Naive thymus-derived CD4-positive, alpha-beta T cell (primary cell): ENCODE measurements at regions of chr9 and their contacts with region 1.

Region 1: DNA sequence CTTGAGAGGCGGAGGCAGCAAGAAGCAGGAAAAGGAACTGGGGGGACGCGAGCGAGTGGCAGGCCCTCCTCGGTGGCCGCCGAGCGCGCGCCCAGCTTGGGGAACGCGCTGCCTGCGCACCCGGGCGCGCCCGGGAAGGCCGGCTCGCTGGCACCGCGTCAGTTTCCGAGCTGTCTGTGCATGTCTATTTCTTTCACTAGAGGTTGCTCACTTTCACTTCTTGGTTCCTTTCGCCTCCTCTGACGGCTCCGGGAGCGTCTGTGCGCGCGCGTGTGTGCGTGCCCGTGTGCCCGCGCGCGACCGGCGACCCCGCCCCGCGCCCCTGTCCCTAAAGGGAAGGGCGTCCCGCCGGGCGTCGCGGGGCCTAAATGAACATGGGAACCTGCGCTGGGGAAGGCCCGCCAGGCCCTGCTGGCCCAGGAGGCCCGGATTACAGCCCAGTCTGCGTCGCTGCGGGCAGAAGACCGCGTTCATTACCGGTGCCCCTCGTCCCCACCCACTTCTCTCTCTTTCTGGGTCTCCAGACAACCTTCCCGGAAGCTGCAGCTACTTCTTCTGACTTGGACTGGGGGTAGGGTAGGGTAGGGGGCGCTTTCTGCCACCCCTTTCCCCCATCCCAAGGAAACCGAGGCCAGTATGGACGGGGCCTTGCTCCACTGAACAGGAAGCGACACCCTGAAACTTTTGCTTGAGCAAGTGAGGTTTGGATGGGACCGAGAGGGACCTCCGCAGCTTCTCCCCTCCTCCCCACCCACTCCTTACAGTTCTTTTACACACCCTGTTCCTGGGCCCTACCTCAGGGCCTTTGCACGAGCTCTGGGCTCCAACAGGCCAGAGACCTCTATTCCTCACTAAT is 205.7 kb upstream of the IER5L start:
- DNase-seq: peak; percentile 60 to 87 (median 79)
- ATAC-seq: peak; percentile 96
- H3K4me3 ChIP-seq: peak overlapping the region; percentile 62
- H3K4me3 Mint-ChIP-seq: peak overlapping the region; percentile 70 to 86 (median 82)
- H3K27ac ChIP-seq: peak overlapping the region; percentile 82
- H3K27ac Mint-ChIP-seq: peak overlapping the region; percentile 72 to 96 (median 92)
- H3K4me1 ChIP-seq: peaks cover 0 to 12% of the 10 kb centered on the region in 2 donors
- H3K4me1 Mint-ChIP-seq: peaks cover 8 to 19% (median 10%) of the 10 kb centered on the region in 7 donors
- H3K27me3 ChIP-seq: no peaks in the 10 kb centered on the region
- H3K27me3 Mint-ChIP-seq: peaks cover 0 to 9% (median 0%) of the 10 kb centered on the region in 5 donors

Region 2: DNA sequence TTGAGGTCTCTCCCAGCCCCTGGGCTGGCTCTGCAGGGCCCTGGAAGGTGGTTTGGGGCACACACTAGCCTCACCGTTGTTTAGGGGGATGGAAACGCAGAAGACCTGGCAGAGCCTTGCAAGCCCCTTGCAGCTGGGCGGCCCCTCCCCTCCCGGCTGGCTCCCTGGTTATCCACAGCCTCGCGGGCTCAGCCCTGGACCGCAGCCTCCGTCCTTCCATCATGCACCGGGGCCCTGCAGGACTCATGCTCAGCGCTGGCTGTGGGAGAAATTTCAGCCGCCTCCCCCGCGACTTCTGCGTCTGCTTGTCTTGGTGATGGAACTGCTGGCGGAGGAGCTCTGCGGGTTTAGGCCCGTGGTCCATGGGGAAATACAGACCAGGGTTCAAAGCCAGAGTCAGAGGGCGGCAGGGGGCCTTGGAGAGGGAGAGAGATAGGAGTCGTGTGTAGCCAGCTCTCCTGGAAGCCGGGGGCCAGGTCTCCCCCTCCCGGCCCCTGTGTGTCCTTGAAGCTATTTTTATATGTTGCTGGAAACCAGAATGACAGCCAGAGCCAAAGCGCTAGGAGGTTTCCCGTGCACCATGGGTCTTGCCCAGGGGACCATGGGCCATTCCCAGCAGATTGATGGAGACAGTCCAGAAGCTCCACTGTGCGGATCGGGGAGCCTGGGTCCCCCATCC is 129.8 kb before region 1 on chr9:
- CTCF ChIA-PET with region 1: no interaction called
- POLR2A ChIA-PET with region 1: no interaction called
- intact Hi-C with region 1: no loop called
- DNase-seq: no peak
- ATAC-seq: no peak
- H3K4me3 ChIP-seq: no peak overlapping the region
- H3K4me3 Mint-ChIP-seq: peak overlapping the region in 1 of 10 donors; percentile 70
- H3K27ac ChIP-seq: no peak overlapping the region
- H3K27ac Mint-ChIP-seq: no peak overlapping the region
- H3K4me1 ChIP-seq: peaks cover 7 to 10% of the 10 kb centered on the region in 2 donors
- H3K4me1 Mint-ChIP-seq: peaks cover 9 to 22% (median 14%) of the 10 kb centered on the region in 7 donors
- H3K27me3 ChIP-seq: no peaks in the 10 kb centered on the region
- H3K27me3 Mint-ChIP-seq: peaks cover 0 to 54% (median 0%) of the 10 kb centered on the region in 5 donors

Region 3: GRCh38 chr9:129333953-129334724 is 49.6 kb before region 1 on chr9:
- CTCF ChIA-PET with region 1: no interaction called
- POLR2A ChIA-PET with region 1: interaction called, 11 read pairs
- intact Hi-C with region 1: loop called in 1 of 2 experiments (anchors 5 kb)
- DNase-seq: peak in 4 of 9 donors; percentile 28 to 36 (median 32)
- ATAC-seq: peak; percentile 67
- H3K4me3 ChIP-seq: no peak overlapping the region
- H3K4me3 Mint-ChIP-seq: peak overlapping the region; percentile 3 to 88 (median 78)
- H3K27ac ChIP-seq: peak overlapping the region; percentile 38
- H3K27ac Mint-ChIP-seq: peak overlapping the region; percentile 29 to 91 (median 83)
- H3K4me1 ChIP-seq: peaks cover 3 to 28% of the 10 kb centered on the region in 2 donors
- H3K4me1 Mint-ChIP-seq: peaks cover 17 to 41% (median 25%) of the 10 kb centered on the region in 7 donors
- H3K27me3 ChIP-seq: no peaks in the 10 kb centered on the region
- H3K27me3 Mint-ChIP-seq: peaks cover 0 to 8% (median 0%) of the 10 kb centered on the region in 5 donors

Region 4: DNA sequence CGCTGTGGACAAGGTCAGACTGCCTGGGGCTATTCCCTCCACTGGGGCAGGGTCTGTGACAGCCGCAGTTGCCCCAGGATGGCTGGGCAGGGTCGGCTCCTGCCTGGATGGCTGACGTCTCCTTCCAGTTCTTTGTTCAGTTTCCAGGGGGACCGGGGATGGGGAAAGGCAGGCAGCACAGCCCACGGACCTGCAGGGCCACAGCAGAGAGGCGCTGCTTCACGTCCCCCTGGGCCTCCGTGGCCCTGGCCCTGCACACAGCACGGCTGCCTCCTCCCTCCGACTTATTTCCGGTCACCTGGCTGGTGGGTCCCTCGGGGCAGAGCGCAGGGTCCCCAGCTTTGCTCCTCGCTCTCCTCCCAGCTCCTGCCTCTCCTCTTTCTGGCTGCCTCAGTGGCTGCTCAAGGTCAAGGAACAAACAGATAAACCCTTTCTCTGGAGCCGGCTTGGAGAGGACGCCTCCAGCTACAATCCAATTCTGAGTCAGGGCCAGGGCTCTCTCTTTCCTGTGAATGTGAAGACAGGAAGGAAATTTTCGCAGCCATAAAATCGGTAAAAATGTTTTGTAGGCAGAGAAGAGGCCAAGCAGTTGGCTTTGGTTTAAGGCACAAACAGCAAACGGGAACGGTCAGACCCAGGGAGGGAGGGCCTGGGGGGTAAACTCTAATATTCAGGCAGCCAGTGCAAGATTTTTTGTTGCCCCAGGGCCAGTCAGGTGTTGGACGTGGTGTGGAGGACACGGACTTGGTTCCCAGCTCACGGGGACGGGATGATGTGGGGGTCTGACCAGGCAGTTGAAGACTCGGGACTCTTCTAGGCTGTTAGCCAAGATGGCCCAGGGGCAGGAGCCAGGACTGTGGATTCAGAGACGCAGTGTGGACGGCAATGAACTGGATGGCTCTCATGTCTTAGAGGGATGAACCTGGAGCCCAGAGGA is 67.6 kb after region 1 on chr9:
- CTCF ChIA-PET with region 1: no interaction called
- POLR2A ChIA-PET with region 1: no interaction called
- intact Hi-C with region 1: no loop called
- DNase-seq: no peak
- ATAC-seq: no peak
- H3K4me3 ChIP-seq: no peak overlapping the region
- H3K4me3 Mint-ChIP-seq: no peak overlapping the region
- H3K27ac ChIP-seq: no peak overlapping the region
- H3K27ac Mint-ChIP-seq: peak overlapping the region in 1 of 9 donors; percentile 52
- H3K4me1 ChIP-seq: no peaks in the 10 kb centered on the region
- H3K4me1 Mint-ChIP-seq: peaks cover 7 to 19% (median 12%) of the 10 kb centered on the region in 7 donors
- H3K27me3 ChIP-seq: no peaks in the 10 kb centered on the region
- H3K27me3 Mint-ChIP-seq: peaks cover 0 to 6% (median 0%) of the 10 kb centered on the region in 5 donors

Region 5: GRCh38 chr9:129487642-129488409 is 104.0 kb after region 1 on chr9:
- CTCF ChIA-PET with region 1: no interaction called
- POLR2A ChIA-PET with region 1: interaction called, 5 read pairs
- intact Hi-C with region 1: loop called (anchors 1 to 2 kb)
- DNase-seq: peak in 5 of 9 donors; percentile 29 to 54 (median 43)
- ATAC-seq: peak; percentile 3
- H3K4me3 ChIP-seq: peak overlapping the region; percentile 70
- H3K4me3 Mint-ChIP-seq: peak overlapping the region; percentile 75 to 92 (median 90)
- H3K27ac ChIP-seq: peak overlapping the region; percentile 66
- H3K27ac Mint-ChIP-seq: peak overlapping the region; percentile 87 to 99 (median 94)
- H3K4me1 ChIP-seq: peaks cover 32 to 46% of the 10 kb centered on the region in 2 donors
- H3K4me1 Mint-ChIP-seq: peaks cover 36 to 68% (median 58%) of the 10 kb centered on the region in 7 donors
- H3K27me3 ChIP-seq: no peaks in the 10 kb centered on the region
- H3K27me3 Mint-ChIP-seq: no peaks in the 10 kb centered on the region

Region 6: GRCh38 chr9:129569502-129570449 is 186.0 kb after region 1 on chr9:
- CTCF ChIA-PET with region 1: no interaction called
- POLR2A ChIA-PET with region 1: interaction called, 4 read pairs
- intact Hi-C with region 1: loop called in 1 of 2 experiments (anchors 1 kb)
- DNase-seq: no peak
- ATAC-seq: peak; percentile 53
- H3K4me3 ChIP-seq: peak overlapping the region; percentile 17
- H3K4me3 Mint-ChIP-seq: peak overlapping the region; percentile 67 to 87 (median 80)
- H3K27ac ChIP-seq: no peak overlapping the region
- H3K27ac Mint-ChIP-seq: peak overlapping the region in 3 of 9 donors; percentile 36 to 58 (median 40)
- H3K4me1 ChIP-seq: peaks cover 3 to 8% of the 10 kb centered on the region in 2 donors
- H3K4me1 Mint-ChIP-seq: peaks cover 11 to 23% (median 14%) of the 10 kb centered on the region in 7 donors
- H3K27me3 ChIP-seq: peaks cover 0 to 8% of the 10 kb centered on the region in 2 donors
- H3K27me3 Mint-ChIP-seq: peaks cover 14 to 30% (median 26%) of the 10 kb centered on the region in 5 donors

Region 7: GRCh38 chr9:129590466-129590865 is 206.7 kb after region 1 on chr9:
- CTCF ChIA-PET with region 1: no interaction called
- POLR2A ChIA-PET with region 1: no interaction called
- intact Hi-C with region 1: no loop called
- DNase-seq: no peak
- ATAC-seq: no peak
- H3K4me3 ChIP-seq: no peak overlapping the region
- H3K4me3 Mint-ChIP-seq: no peak overlapping the region
- H3K27ac ChIP-seq: no peak overlapping the region
- H3K27ac Mint-ChIP-seq: peak overlapping the region in 2 of 9 donors; percentile 22 to 39
- H3K4me1 ChIP-seq: peaks cover 0 to 4% of the 10 kb centered on the region in 2 donors
- H3K4me1 Mint-ChIP-seq: peaks cover 0 to 44% (median 24%) of the 10 kb centered on the region in 7 donors
- H3K27me3 ChIP-seq: no peaks in the 10 kb centered on the region
- H3K27me3 Mint-ChIP-seq: peaks cover 0 to 5% (median 0%) of the 10 kb centered on the region in 5 donors

Region 8: GRCh38 chr9:129610473-129611301 is 226.9 kb after region 1 on chr9:
- CTCF ChIA-PET with region 1: no interaction called
- POLR2A ChIA-PET with region 1: no interaction called
- intact Hi-C with region 1: loop called (anchors 1 to 2 kb)
- DNase-seq: peak; percentile 53 to 79 (median 71)
- ATAC-seq: peak; percentile 83
- H3K4me3 ChIP-seq: peak overlapping the region; percentile 52
- H3K4me3 Mint-ChIP-seq: peak overlapping the region; percentile 57 to 96 (median 80)
- H3K27ac ChIP-seq: peak overlapping the region; percentile 17
- H3K27ac Mint-ChIP-seq: peak overlapping the region in 5 of 9 donors; percentile 62 to 85 (median 67)
- H3K4me1 ChIP-seq: peaks cover 19 to 21% of the 10 kb centered on the region in 2 donors
- H3K4me1 Mint-ChIP-seq: peaks cover 13 to 44% (median 30%) of the 10 kb centered on the region in 7 donors
- H3K27me3 ChIP-seq: no peaks in the 10 kb centered on the region
- H3K27me3 Mint-ChIP-seq: peaks cover 0 to 4% (median 0%) of the 10 kb centered on the region in 5 donors